HCT116 (cell line): ENCODE measurements at regions of chr1 and their contacts with region 1.

Region 1: DNA sequence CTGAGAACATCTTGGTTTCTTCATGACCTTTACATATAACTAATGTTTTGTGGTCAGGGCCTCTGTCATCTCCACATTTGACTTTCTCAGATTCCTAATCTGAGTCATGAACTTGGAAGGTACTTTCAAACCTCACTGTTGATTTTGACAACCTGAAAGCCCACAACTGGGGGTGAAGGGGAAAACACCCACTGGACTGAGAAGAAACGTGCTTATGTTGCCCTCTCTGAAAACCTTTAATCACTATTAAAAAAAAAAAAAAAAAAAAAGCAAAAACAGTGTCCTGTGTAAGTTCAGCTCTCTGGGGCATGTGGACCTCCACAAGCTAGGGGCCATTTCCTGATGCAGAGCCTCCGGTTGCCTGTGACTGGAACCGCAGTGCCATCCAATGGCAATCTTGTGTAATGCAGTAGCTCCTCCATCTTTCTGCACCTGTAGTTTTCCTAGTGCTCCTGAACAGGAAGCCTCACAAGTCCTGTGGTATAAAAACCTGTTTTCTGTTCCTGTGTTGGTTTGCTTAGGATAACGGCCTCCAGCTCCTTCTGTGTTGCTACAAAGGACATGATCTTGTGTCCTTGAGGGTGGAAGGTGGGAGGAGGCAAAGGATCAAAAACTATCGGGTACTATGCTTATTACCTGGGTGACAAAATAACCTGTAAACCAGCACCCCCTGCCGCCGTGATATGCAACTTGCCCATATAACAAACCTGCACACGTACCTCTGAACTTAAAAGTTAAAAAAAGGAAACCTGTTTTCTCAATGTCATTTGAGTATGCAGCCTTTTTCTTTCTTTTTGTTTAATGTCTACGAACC is 124.5 kb downstream of the ZNF648 start:
- DNase-seq: peak; percentile 77
- ATAC-seq: peak; percentile 97
- H3K4me3 ChIP-seq: no peak overlapping the region; a peak in 1 of 4 replicates
- H3K27ac ChIP-seq: no peak overlapping the region
- H3K4me1 ChIP-seq: peaks cover 3% of the 10 kb centered on the region in 2 experiments; a peak in 1 of 4 replicates
- H3K27me3 ChIP-seq: peaks cover 12% of the 10 kb centered on the region
- CTCF ChIP-seq: peak; percentile 60 to 97 (median 81)
- POLR2A ChIP-seq: no peak
- RAD21 ChIP-seq: peak; percentile 81

Region 2: GRCh38 chr1:181189691-181190363 is 747.1 kb before region 1 on chr1:
- CTCF ChIA-PET with region 1: interaction called, 3 read pairs
- POLR2A ChIA-PET with region 1: no interaction called
- RAD21 ChIA-PET with region 1: interaction called in 1 of 2 experiments, 6 read pairs
- intact Hi-C with region 1: loop called (anchors 5 kb)
- DNase-seq: peak; percentile 19
- ATAC-seq: peak; percentile 98
- H3K4me3 ChIP-seq: peak overlapping the region in 1 of 2 experiments; percentile 25; a peak in 3 of 4 replicates
- H3K27ac ChIP-seq: no peak overlapping the region
- H3K4me1 ChIP-seq: peaks cover 0 to 5% of the 10 kb centered on the region in 2 experiments; a peak in 1 of 4 replicates
- H3K27me3 ChIP-seq: 0 out of 2 replicates have a peak, but pooled peaks cover 9% of the 10 kb centered on the region
- CTCF ChIP-seq: peak; percentile 97 to 99 (median 98)
- POLR2A ChIP-seq: no peak
- RAD21 ChIP-seq: peak; percentile 97

Region 3: DNA sequence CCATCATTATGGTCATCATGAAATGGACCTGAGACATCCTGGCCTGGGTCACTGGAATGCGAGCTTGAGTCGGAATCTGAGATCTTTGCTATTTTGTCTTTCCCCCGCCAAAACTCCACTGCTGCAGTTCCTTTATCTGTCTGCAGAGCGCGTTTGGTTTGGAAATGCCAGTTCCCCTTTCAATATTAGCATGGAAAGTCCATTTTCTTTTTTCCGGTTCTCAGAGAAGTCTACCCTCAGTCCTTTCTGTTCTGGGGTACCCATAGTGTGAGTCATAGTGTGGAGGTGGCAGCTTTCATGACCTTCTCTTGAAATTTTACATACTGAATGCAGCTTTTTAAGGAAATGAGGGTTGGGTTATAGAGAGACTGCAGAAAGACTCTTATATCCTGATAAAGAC is 439.1 kb before region 1 on chr1:
- CTCF ChIA-PET with region 1: interaction called, 5 read pairs
- POLR2A ChIA-PET with region 1: no interaction called
- RAD21 ChIA-PET with region 1: no interaction called
- intact Hi-C with region 1: loop called (anchors 5 kb)
- DNase-seq: no peak
- ATAC-seq: no peak; the same call in 1 of the 2 replicates
- H3K4me3 ChIP-seq: no peak overlapping the region
- H3K27ac ChIP-seq: no peak overlapping the region
- H3K4me1 ChIP-seq: no peaks in the 10 kb centered on the region
- H3K27me3 ChIP-seq: peaks cover 51% of the 10 kb centered on the region
- CTCF ChIP-seq: peak in 2 of 3 experiments; percentile 32 to 36; a peak in 3 of 6 replicates
- POLR2A ChIP-seq: no peak
- RAD21 ChIP-seq: no peak

Region 4: GRCh38 chr1:181737056-181737455 is 199.9 kb before region 1 on chr1:
- CTCF ChIA-PET with region 1: no interaction called
- POLR2A ChIA-PET with region 1: no interaction called
- RAD21 ChIA-PET with region 1: no interaction called
- intact Hi-C with region 1: loop called (anchors 10 kb)
- DNase-seq: no peak
- ATAC-seq: no peak
- H3K4me3 ChIP-seq: no peak overlapping the region
- H3K27ac ChIP-seq: no peak overlapping the region
- H3K4me1 ChIP-seq: no peaks in the 10 kb centered on the region
- H3K27me3 ChIP-seq: peaks cover 36% of the 10 kb centered on the region
- CTCF ChIP-seq: 0 out of 6 replicates have a peak, but pooled peaks of 1 of the 3 experiments have one; percentile 2
- POLR2A ChIP-seq: no peak
- RAD21 ChIP-seq: peak; percentile 28

Region 5: GRCh38 chr1:182054698-182055326 is 117.8 kb after region 1 on chr1:
- CTCF ChIA-PET with region 1: interaction called, 14 read pairs
- POLR2A ChIA-PET with region 1: no interaction called
- RAD21 ChIA-PET with region 1: interaction called in 1 of 2 experiments, 4 read pairs
- intact Hi-C with region 1: no loop called
- DNase-seq: peak; percentile 26
- ATAC-seq: peak; percentile 84
- H3K4me3 ChIP-seq: no peak overlapping the region
- H3K27ac ChIP-seq: no peak overlapping the region
- H3K4me1 ChIP-seq: no peaks in the 10 kb centered on the region
- H3K27me3 ChIP-seq: no peaks in the 10 kb centered on the region
- CTCF ChIP-seq: peak; percentile 51 to 68 (median 60); a peak in 5 of 6 replicates
- POLR2A ChIP-seq: no peak
- RAD21 ChIP-seq: peak; percentile 70